Activated CD4-positive, alpha-beta memory T cell treated with anti-CD3 and anti-CD28 coated beads for 36 hours (primary cell): ENCODE measurements at regions of chr2 and their contacts with region 1.

Region 1: GRCh38 chr2:160269803-160270570 is 69.9 kb upstream of the ITGB6 start:
- DNase-seq: peak; percentile 81
- H3K4me3 Mint-ChIP-seq: peak overlapping the region; percentile 63
- H3K27ac Mint-ChIP-seq: peak overlapping the region; percentile 28
- H3K4me1 Mint-ChIP-seq: peaks cover 45% of the 10 kb centered on the region
- H3K27me3 Mint-ChIP-seq: peaks cover 5% of the 10 kb centered on the region

Region 2: GRCh38 chr2:160039166-160039903 is 230.7 kb before region 1 on chr2:
- CTCF ChIA-PET with region 1: no interaction called
- POLR2A ChIA-PET with region 1: no interaction called
- intact Hi-C with region 1: no loop called
- DNase-seq: no peak
- H3K4me3 Mint-ChIP-seq: no peak overlapping the region
- H3K27ac Mint-ChIP-seq: no peak overlapping the region
- H3K4me1 Mint-ChIP-seq: peaks cover 15% of the 10 kb centered on the region
- H3K27me3 Mint-ChIP-seq: peaks cover 10% of the 10 kb centered on the region

Region 3: DNA sequence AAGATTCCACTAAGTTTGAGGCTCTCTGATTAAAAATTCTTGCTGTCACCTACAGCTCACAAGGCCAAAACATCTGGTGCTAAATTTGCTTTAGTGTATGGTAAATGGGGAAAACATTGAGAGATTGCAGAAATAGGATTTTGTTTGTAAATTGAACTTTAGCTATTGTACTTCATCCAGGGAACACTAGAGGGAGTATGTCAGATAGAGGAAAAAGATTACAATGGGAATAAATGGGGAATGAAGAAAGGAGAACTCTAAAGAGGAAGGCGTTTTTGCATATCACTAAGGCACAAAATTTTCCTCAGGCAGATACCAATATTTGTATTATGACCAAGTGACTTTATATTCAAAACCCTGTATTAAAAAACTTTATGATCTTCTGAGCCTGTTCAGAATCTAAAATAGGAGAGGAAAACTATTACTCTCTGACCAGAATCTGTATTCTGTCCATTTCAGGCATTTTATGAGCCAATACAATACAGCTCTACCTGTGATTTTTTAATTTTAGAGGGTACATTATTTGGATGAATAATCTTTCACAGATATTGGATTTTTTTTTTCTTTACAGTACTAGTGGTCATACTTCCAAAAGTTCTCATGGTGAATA is 17.6 kb before region 1 on chr2:
- CTCF ChIA-PET with region 1: interaction called, 19 read pairs
- POLR2A ChIA-PET with region 1: no interaction called
- intact Hi-C with region 1: no loop called
- DNase-seq: no peak
- H3K4me3 Mint-ChIP-seq: no peak overlapping the region
- H3K27ac Mint-ChIP-seq: no peak overlapping the region
- H3K4me1 Mint-ChIP-seq: no peaks in the 10 kb centered on the region
- H3K27me3 Mint-ChIP-seq: peaks cover 1% of the 10 kb centered on the region

Region 4: GRCh38 chr2:160294339-160294803 is 24.4 kb after region 1 on chr2:
- CTCF ChIA-PET with region 1: interaction called, 13 read pairs
- POLR2A ChIA-PET with region 1: interaction called, 8 read pairs
- intact Hi-C with region 1: loop called (anchors 1 kb)
- DNase-seq: peak; percentile 68
- H3K4me3 Mint-ChIP-seq: no peak overlapping the region
- H3K27ac Mint-ChIP-seq: peak overlapping the region; percentile 18
- H3K4me1 Mint-ChIP-seq: peaks cover 76% of the 10 kb centered on the region
- H3K27me3 Mint-ChIP-seq: no peaks in the 10 kb centered on the region

Region 5: DNA sequence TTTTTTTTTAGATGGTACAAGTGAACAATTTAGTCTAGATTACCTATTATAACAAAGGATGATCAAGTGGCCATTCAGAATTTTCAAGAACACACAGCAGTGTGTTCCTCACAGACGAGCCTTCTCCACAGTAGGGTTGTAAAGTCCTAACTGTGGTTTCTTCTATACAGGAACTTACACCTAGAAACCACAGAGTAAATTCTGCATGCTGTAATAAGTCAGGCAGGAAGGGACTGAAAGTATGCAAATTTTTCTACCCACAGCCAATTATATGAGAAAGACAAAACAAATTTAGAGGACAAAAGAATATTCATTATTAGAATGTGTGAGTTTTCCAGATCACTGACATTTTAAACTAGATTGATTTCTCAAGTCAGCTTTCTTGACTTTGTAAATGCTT is 124.2 kb after region 1 on chr2:
- CTCF ChIA-PET with region 1: interaction called, 3 read pairs
- POLR2A ChIA-PET with region 1: no interaction called
- intact Hi-C with region 1: loop called (anchors 5 kb)
- DNase-seq: no peak
- H3K4me3 Mint-ChIP-seq: peak overlapping the region; percentile 25
- H3K27ac Mint-ChIP-seq: peak overlapping the region; percentile 64
- H3K4me1 Mint-ChIP-seq: peaks cover 58% of the 10 kb centered on the region
- H3K27me3 Mint-ChIP-seq: no peaks in the 10 kb centered on the region

Region 6: GRCh38 chr2:160472839-160473251 is 202.9 kb after region 1 on chr2:
- CTCF ChIA-PET with region 1: no interaction called
- POLR2A ChIA-PET with region 1: no interaction called
- intact Hi-C with region 1: loop called (anchors 5 kb)
- DNase-seq: no peak
- H3K4me3 Mint-ChIP-seq: no peak overlapping the region
- H3K27ac Mint-ChIP-seq: peak overlapping the region; percentile 54
- H3K4me1 Mint-ChIP-seq: peaks cover 63% of the 10 kb centered on the region
- H3K27me3 Mint-ChIP-seq: no peaks in the 10 kb centered on the region

Region 7: DNA sequence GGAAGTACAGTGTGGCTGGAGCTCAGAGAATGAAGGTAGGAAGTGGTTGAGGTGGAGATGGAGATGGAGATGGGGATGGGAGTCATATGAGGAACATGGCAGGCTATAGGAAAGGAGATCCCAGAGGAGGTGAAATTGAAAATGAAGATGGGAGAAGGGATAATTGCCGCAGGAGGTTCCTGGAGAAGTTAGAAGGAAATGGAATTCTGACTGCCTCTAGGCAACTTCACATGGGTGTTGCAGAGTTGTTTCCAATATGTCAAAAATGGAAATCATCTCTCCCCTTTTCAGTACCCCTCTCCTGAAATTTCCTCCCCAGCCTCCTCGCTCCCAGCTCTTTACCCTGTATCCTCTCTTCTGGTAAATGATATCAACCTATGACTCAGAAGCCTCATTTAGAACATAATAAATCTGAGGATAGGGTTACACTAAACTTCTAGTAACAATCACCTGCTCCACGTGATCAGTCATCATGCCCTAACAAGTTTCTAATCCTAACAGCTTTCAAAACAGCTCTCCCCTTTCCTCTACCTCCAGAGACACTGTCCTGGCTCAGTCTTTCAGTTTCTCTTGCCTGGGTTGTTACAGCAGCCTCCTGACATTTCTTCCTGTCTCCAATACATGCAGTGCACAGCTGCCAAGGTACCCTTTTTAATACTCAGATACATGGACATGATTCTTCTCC is 425.6 kb after region 1 on chr2:
- CTCF ChIA-PET with region 1: no interaction called
- POLR2A ChIA-PET with region 1: no interaction called
- intact Hi-C with region 1: no loop called
- DNase-seq: no peak
- H3K4me3 Mint-ChIP-seq: no peak overlapping the region
- H3K27ac Mint-ChIP-seq: no peak overlapping the region
- H3K4me1 Mint-ChIP-seq: no peaks in the 10 kb centered on the region
- H3K27me3 Mint-ChIP-seq: no peaks in the 10 kb centered on the region